Psoas muscle (tissue), 8 donors: ENCODE measurements at regions of chr14 and their contacts with region 1.

Region 1: DNA sequence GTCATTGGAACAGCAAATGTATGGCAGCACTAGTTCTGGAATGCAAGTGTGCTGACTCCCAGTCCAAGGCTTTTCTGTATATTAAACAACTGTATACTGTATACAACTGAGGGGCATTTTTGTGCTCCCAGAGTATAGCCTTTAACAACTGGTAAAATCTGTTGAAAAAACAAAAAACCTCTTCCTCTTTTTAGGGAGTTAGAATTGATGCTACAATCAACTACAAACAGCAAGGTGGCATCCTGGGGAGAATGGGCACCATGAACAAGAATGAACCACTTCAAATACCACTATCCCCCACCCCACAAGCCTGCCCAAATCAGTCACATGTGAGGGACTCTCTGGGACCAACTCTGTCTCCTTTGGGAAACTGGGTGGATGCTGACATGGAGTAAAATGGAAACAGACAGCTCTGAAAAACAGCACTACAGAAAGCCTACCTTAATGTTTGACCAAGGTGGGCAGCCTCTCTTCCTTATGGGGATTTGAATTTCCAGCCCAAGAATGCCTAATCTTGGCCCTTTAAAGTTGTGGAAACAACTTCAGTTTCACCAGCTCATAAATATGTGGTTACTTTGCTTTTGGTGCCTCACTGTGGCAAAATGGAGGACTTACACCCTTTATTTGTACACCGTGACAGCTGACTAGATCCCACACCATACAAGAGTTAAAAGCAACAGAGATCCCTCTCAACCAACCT is 7.5 kb downstream of the VTI1B start:
- DNase-seq: no peak
- ATAC-seq: peak; percentile 70 to 87 (median 80)
- H3K4me3 ChIP-seq: no peak overlapping the region
- H3K27ac ChIP-seq: no peak overlapping the region
- H3K4me1 ChIP-seq: peaks cover 21% of the 10 kb centered on the region
- H3K27me3 ChIP-seq: no peaks in the 10 kb centered on the region
- CTCF ChIP-seq: peak; percentile 66

Region 2: DNA sequence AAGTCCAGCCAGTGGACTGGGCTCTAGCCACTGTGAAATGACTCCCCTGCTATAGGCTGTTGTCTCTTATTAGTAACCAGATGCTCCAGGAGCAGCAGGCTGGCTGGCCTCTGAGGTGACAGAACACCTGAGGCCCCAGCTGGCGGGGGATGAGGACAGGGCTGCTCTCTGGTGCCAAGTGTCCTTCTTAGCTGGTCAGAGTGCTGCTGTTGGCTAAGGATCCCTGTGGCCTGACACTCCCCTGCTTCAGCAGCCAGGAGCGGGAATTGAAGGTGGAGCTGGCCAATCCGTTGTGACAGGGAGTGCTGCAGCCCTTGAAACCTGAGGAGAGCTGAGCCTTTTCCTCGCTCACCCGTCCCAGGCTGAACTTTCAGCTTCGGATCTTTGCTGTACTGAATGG is 209.1 kb before region 1 on chr14:
- intact Hi-C with region 1: no loop called
- DNase-seq: peak; percentile 44 to 81
- ATAC-seq: peak; percentile 88 to 97 (median 96)
- H3K4me3 ChIP-seq: no peak overlapping the region
- H3K27ac ChIP-seq: peak overlapping the region; percentile 43
- H3K4me1 ChIP-seq: peaks cover 24% of the 10 kb centered on the region
- H3K27me3 ChIP-seq: no peaks in the 10 kb centered on the region
- CTCF ChIP-seq: no peak

Region 3: GRCh38 chr14:67583711-67584644 is 82.9 kb before region 1 on chr14:
- intact Hi-C with region 1: loop called in 1 of 2 experiments (anchors 5 kb)
- DNase-seq: no peak
- ATAC-seq: peak; percentile 81 to 91 (median 83)
- H3K4me3 ChIP-seq: no peak overlapping the region
- H3K27ac ChIP-seq: no peak overlapping the region
- H3K4me1 ChIP-seq: no peaks in the 10 kb centered on the region
- H3K27me3 ChIP-seq: no peaks in the 10 kb centered on the region
- CTCF ChIP-seq: peak; percentile 69

Region 4: DNA sequence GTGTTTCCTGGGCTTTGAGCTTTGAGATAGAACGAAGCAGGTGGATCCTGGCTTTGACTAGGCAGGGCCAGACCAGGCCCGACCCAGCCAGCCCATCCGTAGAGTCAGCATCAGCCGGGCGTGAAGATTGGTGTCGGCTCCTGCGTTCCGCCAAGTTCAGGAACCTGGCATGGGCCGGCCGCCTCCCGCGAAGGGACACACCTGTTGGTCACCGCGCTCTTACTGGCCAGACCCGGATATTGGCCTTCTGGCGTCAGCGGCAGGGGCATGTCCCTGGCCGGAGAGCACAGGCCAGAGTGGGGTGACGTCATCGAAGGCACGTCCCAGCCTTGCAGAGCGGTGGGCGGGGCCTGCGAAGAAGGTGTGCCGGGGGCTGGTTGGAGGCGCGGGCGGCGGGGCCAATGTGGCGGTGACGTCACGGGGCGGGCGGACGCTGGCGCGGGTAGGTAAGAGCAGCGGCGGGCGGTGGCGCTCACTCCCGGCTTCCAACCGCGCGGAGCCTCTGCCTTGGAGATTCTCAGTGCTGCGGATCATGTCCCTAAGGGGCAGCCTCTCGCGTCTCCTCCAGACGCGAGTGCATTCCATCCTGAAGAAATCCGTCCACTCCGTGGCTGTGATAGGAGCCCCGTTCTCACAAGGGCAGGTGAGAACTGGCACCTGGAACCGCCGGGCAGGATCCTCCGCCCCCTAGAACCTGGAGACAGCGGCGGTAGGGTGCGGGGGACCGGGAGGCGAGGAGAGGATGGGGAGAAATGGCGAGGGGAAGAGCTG is 47.3 kb before region 1 on chr14 and contains the start of gene ARG2:
- intact Hi-C with region 1: loop called (anchors 2 to 5 kb)
- DNase-seq: peak; percentile 95 to 97
- ATAC-seq: peak; percentile 95 to 97 (median 96)
- H3K4me3 ChIP-seq: peak within 1 kb of the TSS; percentile 76
- H3K27ac ChIP-seq: peak within 1 kb of the TSS; percentile 74
- H3K4me1 ChIP-seq: peaks cover 19% of the 10 kb centered on the region
- H3K27me3 ChIP-seq: no peaks in the 10 kb centered on the region
- CTCF ChIP-seq: no peak
- total RNA-seq, gene ARG2: 1.3 to 19.3 (median 8.0) TPM

Region 5: DNA sequence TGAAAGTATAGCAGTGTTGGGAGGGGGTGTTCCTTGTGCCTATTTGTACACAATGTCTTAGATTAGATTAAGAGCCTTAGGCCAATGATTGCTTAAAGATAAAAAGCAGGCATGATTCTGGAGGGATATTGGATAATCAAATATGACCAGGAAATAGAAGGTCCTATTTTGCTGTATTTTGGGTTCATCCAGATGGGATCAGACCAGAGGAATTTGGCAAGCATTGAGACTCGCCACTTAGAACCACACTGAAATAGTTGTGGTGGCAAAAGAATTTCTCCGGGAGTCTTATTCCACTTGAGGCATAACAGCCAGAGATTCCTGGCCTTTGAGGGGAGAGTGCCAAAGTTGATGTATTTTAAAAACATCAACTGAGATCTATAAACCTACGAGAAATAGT is 479.9 kb after region 1 on chr14:
- intact Hi-C with region 1: no loop called
- DNase-seq: no peak
- ATAC-seq: peak; percentile 44 to 82 (median 53)
- H3K4me3 ChIP-seq: no peak overlapping the region
- H3K27ac ChIP-seq: peak overlapping the region; percentile 85
- H3K4me1 ChIP-seq: peaks cover 56% of the 10 kb centered on the region
- H3K27me3 ChIP-seq: no peaks in the 10 kb centered on the region
- CTCF ChIP-seq: no peak